ENCODE measurements at regions of chr4 and their contacts with region 1.

Region 1: GRCh38 chr4:140153718-140154571 is at the start of gene MAML3:
- DNase-seq: no peak
- ATAC-seq: peak; percentile 49
- H3K4me3 ChIP-seq: peak within 1 kb of the TSS; percentile 82 to 95
- H3K27ac ChIP-seq: peak within 1 kb of the TSS; percentile 89
- H3K4me1 ChIP-seq: peaks cover 12% of the 10 kb centered on the region
- H3K27me3 ChIP-seq: no peaks in the 10 kb centered on the region
- CTCF ChIP-seq: no peak
- total RNA-seq, gene MAML3: 7.7 TPM

Region 2: DNA sequence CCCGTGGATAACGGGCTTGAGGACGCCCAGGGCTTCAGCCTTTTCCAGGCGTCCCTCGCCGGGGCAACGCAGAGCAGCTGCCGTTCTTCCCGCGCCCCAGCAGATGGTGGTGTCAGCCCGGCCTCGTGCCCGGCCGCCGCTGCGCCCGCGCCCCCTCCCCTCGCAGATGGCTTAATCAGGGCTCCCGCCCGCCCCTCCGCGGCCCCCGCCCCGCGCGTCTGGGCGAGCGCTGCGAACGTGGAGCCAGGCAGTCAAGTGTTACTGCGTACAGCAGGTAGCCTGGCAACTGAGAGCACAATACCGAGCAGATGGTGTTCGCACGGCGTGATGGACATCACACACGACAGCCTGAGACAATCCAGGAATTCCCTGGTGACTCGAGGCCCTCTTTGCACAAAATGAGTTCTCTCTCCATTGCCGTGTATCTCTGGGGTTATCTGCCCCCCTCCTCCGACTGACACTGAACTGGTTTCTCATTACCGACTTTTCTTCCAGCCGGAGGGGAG is 419.0 kb before region 1 on chr4:
- CTCF ChIA-PET with region 1: no interaction called
- POLR2A ChIA-PET with region 1: no interaction called
- in situ Hi-C with region 1: no loop called
- intact Hi-C with region 1: loop called (anchors 10 kb)
- DNase-seq: no peak
- ATAC-seq: peak; percentile 97
- H3K4me3 ChIP-seq: peak overlapping the region; percentile 31 to 48
- H3K27ac ChIP-seq: peak overlapping the region; percentile 69
- H3K4me1 ChIP-seq: peaks cover 3% of the 10 kb centered on the region
- H3K27me3 ChIP-seq: no peaks in the 10 kb centered on the region
- CTCF ChIP-seq: peak; percentile 83

Region 3: GRCh38 chr4:140012688-140013486 is 141.1 kb before region 1 on chr4:
- CTCF ChIA-PET with region 1: no interaction called
- POLR2A ChIA-PET with region 1: interaction called, 15 read pairs
- in situ Hi-C with region 1: no loop called
- intact Hi-C with region 1: loop called (anchors 5 kb)
- DNase-seq: peak; percentile 82
- ATAC-seq: peak; percentile 96
- H3K4me3 ChIP-seq: peak overlapping the region in 1 of 2 experiments; percentile 24; a peak in 1 of 4 replicates
- H3K27ac ChIP-seq: peak overlapping the region; percentile 63
- H3K4me1 ChIP-seq: peaks cover 18% of the 10 kb centered on the region
- H3K27me3 ChIP-seq: no peaks in the 10 kb centered on the region
- CTCF ChIP-seq: peak; percentile 72

Region 4: DNA sequence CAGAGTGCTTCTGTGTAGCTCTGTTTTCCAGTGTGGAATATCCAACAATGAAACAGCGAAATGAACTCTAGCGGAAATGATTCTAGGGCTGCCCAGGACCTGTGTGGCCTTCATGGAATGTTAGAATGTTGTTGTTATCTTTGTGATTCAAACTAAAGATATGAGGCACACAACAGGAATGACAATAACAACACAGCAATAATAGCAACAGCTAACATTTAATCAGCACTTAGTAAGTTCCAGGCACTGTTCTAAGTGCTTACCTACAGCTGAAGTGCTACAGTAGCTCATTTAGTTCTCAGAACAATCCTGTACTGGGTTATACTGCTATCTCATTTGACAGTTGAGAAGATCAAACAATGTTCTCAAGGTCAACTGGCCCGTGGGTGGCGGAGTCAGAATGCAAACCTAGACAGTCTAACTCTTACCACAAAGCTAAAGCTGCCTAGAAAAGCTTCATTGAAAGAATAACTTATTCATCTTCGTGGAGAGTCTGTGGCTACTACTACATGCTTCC is 63.7 kb before region 1 on chr4:
- CTCF ChIA-PET with region 1: interaction called, 5 read pairs
- POLR2A ChIA-PET with region 1: interaction called, 28 read pairs
- in situ Hi-C with region 1: no loop called
- intact Hi-C with region 1: loop called (anchors 5 kb)
- DNase-seq: peak; percentile 92
- ATAC-seq: peak; percentile 74
- H3K4me3 ChIP-seq: peak overlapping the region in 1 of 2 experiments; percentile 14; a peak in 1 of 4 replicates
- H3K27ac ChIP-seq: peak overlapping the region; percentile 96
- H3K4me1 ChIP-seq: peaks cover 77% of the 10 kb centered on the region
- H3K27me3 ChIP-seq: no peaks in the 10 kb centered on the region
- CTCF ChIP-seq: no peak

Region 5: DNA sequence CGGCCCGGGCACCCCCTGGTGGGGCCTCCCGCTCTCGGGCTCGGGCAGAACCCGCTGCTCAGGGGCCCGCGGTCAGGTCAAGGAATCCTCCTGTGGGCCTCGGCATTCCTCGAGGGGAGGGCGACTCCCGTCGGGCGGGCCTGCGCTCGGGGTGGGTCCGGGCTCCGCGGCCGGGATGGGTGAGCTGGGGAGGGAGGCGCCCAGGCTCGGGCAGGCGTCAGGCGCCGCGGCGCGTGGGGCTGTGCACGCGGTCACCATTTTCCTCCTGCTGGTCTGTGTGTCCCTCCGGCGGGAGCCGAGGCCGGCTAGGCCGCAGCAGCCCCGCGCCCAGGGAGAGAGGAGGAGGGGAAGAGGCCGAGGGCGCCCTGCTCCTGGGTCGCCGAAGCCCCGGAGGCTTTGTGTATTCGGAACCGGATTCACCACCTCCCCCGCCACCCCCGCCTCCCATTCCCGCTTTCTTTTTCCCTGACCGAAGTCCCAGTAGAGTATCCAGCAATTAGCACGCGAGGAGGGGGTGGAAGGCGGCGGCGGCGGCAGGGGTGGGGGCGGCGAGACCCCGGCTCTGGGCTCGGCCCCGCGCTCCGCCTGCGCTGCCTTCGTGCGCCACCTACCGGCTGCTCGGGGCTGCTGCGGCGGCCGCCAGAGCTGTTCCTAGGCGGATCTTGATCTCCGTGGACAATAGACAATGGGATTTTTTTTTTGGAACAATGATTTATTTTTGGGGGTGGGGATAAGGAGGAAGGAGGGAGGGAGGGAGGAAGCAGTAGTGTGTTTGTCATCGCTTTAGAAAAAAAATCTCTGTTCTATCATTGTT is 99.0 kb after region 1 on chr4:
- CTCF ChIA-PET with region 1: no interaction called
- POLR2A ChIA-PET with region 1: no interaction called
- in situ Hi-C with region 1: no loop called
- intact Hi-C with region 1: loop called (anchors 1 kb)
- DNase-seq: no peak
- ATAC-seq: peak; percentile 87
- H3K4me3 ChIP-seq: peak overlapping the region; percentile 46 to 55
- H3K27ac ChIP-seq: peak overlapping the region; percentile 71
- H3K4me1 ChIP-seq: peaks cover 16% of the 10 kb centered on the region
- H3K27me3 ChIP-seq: no peaks in the 10 kb centered on the region
- CTCF ChIP-seq: peak; percentile 96